WTC11 (cell line): ENCODE measurements at regions of chrX and their contacts with region 1.

Region 1: GRCh38 chrX:134764212-134764785 is 106.0 kb upstream of the PLAC1 start:
- DNase-seq: no peak
- ATAC-seq: peak; percentile 98
- H3K4me3 Mint-ChIP-seq: no peak overlapping the region
- H3K27ac Mint-ChIP-seq: no peak overlapping the region
- H3K4me1 Mint-ChIP-seq: peaks cover 13% of the 10 kb centered on the region
- H3K27me3 Mint-ChIP-seq: no peaks in the 10 kb centered on the region
- CTCF ChIP-seq: no peak

Region 2: GRCh38 chrX:134520860-134521390 is 243.4 kb before region 1 on chrX:
- CTCF ChIA-PET with region 1: interaction called, 35 read pairs
- POLR2A ChIA-PET with region 1: no interaction called
- DNase-seq: peak; percentile 35
- ATAC-seq: peak; percentile 99
- H3K4me3 Mint-ChIP-seq: no peak overlapping the region
- H3K27ac Mint-ChIP-seq: no peak overlapping the region
- H3K4me1 Mint-ChIP-seq: no peaks in the 10 kb centered on the region
- H3K27me3 Mint-ChIP-seq: no peaks in the 10 kb centered on the region
- CTCF ChIP-seq: no peak

Region 3: DNA sequence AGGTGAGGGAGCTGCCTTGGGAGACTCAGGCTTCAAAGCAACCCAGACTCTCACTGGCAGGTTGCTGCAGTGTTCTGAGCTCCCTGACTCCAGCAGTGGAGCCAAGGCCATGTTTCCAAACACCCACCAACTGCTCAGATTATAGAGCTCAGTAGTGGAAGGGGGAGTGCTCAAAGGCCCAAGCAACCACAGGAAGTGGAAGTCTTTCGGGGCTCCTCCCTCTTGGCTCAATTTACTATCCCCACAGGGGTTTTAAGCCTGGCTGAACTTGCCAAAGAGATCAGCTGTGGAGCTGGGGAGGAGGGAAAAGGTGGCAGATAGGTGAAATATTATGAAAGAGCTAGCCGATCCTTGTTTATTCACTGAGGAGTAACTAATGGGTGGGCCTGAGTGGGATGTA is 221.8 kb before region 1 on chrX:
- CTCF ChIA-PET with region 1: interaction called, 10 read pairs
- POLR2A ChIA-PET with region 1: no interaction called
- DNase-seq: no peak
- ATAC-seq: peak; percentile 46
- H3K4me3 Mint-ChIP-seq: no peak overlapping the region; the same call in 1 of the 2 replicates
- H3K27ac Mint-ChIP-seq: 0 out of 2 replicates have a peak overlapping the region, but pooled peaks have one; percentile 49
- H3K4me1 Mint-ChIP-seq: peaks cover 43% of the 10 kb centered on the region
- H3K27me3 Mint-ChIP-seq: peaks cover 37% of the 10 kb centered on the region
- CTCF ChIP-seq: no peak

Region 4: DNA sequence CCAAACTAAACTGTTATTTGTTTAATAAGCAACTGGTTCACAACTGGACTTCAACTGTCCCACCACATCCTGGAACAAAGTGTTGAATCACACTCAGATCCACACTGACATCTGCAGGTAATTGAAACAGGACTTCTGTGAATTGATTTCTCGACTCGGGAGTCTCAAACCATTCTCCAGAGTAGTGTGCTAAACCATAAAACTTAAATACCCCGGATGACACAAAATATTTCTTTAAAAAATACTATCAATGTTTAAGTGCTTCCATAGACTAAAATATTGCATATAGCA is 10.6 kb before region 1 on chrX:
- CTCF ChIA-PET with region 1: interaction called, 39 read pairs
- POLR2A ChIA-PET with region 1: no interaction called
- DNase-seq: no peak
- ATAC-seq: no peak
- H3K4me3 Mint-ChIP-seq: no peak overlapping the region
- H3K27ac Mint-ChIP-seq: no peak overlapping the region
- H3K4me1 Mint-ChIP-seq: no peaks in the 10 kb centered on the region
- H3K27me3 Mint-ChIP-seq: no peaks in the 10 kb centered on the region
- CTCF ChIP-seq: no peak

Region 5: DNA sequence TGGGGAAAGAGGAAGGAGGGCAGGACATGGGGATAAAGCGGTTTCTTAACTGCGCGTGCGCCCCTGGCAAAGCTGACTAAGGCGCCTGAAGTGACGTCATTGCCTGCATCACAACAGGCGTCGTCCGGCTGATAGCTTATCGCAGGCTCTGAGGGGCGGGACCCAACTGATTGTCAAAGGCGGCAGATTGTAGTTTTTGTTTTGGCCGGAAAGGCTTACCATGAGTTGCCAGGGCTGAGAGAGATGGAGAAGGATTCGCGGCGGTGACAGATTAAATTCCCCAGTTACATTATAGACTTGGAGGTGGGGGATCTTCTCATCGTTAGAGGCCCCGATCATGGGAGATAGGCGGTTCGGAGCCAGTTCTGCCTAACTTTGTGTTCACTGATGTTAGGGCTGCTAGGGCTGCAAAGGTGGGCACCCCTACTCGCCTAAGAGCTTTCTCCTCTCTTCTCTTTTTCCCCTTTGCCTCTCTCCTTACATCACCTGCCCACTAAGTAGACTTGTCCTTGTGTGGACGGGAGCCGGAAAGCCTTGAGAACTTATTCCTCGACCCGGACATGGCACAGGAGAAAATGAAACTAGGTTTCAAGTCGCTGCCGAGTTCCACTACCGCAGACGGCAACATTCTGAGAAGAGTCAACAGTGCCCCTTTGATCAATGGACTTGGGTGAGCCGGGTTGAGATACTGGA is 42.9 kb after region 1 on chrX:
- CTCF ChIA-PET with region 1: interaction called, 11 read pairs
- POLR2A ChIA-PET with region 1: no interaction called
- DNase-seq: peak; percentile 84
- ATAC-seq: peak; percentile 83
- H3K4me3 Mint-ChIP-seq: peak overlapping the region; percentile 86
- H3K27ac Mint-ChIP-seq: peak overlapping the region; percentile 82
- H3K4me1 Mint-ChIP-seq: peaks cover 44% of the 10 kb centered on the region
- H3K27me3 Mint-ChIP-seq: no peaks in the 10 kb centered on the region
- CTCF ChIP-seq: no peak